ENCODE measurements at regions of chr7 and their contacts with region 1.

Region 1: GRCh38 chr7:77409739-77410547 is 6.2 kb downstream of the GSAP start:
- DNase-seq: no peak
- ATAC-seq: peak; percentile 61

Region 2: GRCh38 chr7:77441046-77441445 is 31.1 kb after region 1 on chr7:
- intact Hi-C with region 1: loop called (anchors 2 kb)
- DNase-seq: no peak
- ATAC-seq: no peak

Region 3: GRCh38 chr7:77587272-77587671 is 177.3 kb after region 1 on chr7:
- intact Hi-C with region 1: no loop called
- DNase-seq: no peak
- ATAC-seq: no peak